ENCODE measurements at regions of chr12 and their contacts with region 1.

Region 1: GRCh38 chr12:93514853-93515252 is 47.5 kb downstream of the MRPL42 start:
- DNase-seq: no peak
- H3K4me3 ChIP-seq: no peak overlapping the region
- H3K27ac ChIP-seq: no peak overlapping the region
- H3K4me1 ChIP-seq: no peaks in the 10 kb centered on the region
- H3K27me3 ChIP-seq: no peaks in the 10 kb centered on the region
- CTCF ChIP-seq: no peak

Region 2: GRCh38 chr12:92170050-92170449 is 1344.8 kb before region 1 on chr12:
- CTCF ChIA-PET with region 1: interaction called, 11 read pairs
- POLR2A ChIA-PET with region 1: no interaction called
- intact Hi-C with region 1: no loop called
- DNase-seq: no peak
- H3K4me3 ChIP-seq: no peak overlapping the region
- H3K27ac ChIP-seq: no peak overlapping the region
- H3K4me1 ChIP-seq: no peaks in the 10 kb centered on the region
- H3K27me3 ChIP-seq: no peaks in the 10 kb centered on the region
- CTCF ChIP-seq: no peak

Region 3: GRCh38 chr12:93536766-93537488 is 22.1 kb after region 1 on chr12:
- CTCF ChIA-PET with region 1: no interaction called
- POLR2A ChIA-PET with region 1: no interaction called
- intact Hi-C with region 1: no loop called
- DNase-seq: no peak
- H3K4me3 ChIP-seq: no peak overlapping the region
- H3K27ac ChIP-seq: no peak overlapping the region
- H3K4me1 ChIP-seq: no peaks in the 10 kb centered on the region
- H3K27me3 ChIP-seq: no peaks in the 10 kb centered on the region
- CTCF ChIP-seq: no peak

Region 4: GRCh38 chr12:93710574-93710926 is 195.7 kb after region 1 on chr12:
- CTCF ChIA-PET with region 1: interaction called, 14 read pairs
- POLR2A ChIA-PET with region 1: no interaction called
- intact Hi-C with region 1: no loop called
- DNase-seq: no peak
- H3K4me3 ChIP-seq: no peak overlapping the region
- H3K27ac ChIP-seq: no peak overlapping the region
- H3K4me1 ChIP-seq: peaks cover 10% of the 10 kb centered on the region; the same call in 1 of the 2 replicates
- H3K27me3 ChIP-seq: no peaks in the 10 kb centered on the region
- CTCF ChIP-seq: no peak

Measured in PC-9 (cell line).